Activated CD4-positive, alpha-beta T cell treated with anti-CD3 and anti-CD28 coated beads for 36 hours (primary cell): ENCODE measurements at regions of chr10 and their contacts with region 1.

Region 1: GRCh38 chr10:27223964-27224363 is 16.6 kb downstream of the ACBD5 start:
- DNase-seq: peak; percentile 65
- ATAC-seq: peak; percentile 73
- H3K4me3 Mint-ChIP-seq: no peak overlapping the region
- H3K27ac Mint-ChIP-seq: no peak overlapping the region
- H3K4me1 Mint-ChIP-seq: peaks cover 8% of the 10 kb centered on the region
- H3K27me3 Mint-ChIP-seq: no peaks in the 10 kb centered on the region

Region 2: GRCh38 chr10:27207350-27207749 is 16.6 kb before region 1 on chr10:
- CTCF ChIA-PET with region 1: interaction called, 10 read pairs
- POLR2A ChIA-PET with region 1: no interaction called
- intact Hi-C with region 1: no loop called
- DNase-seq: no peak
- ATAC-seq: no peak
- H3K4me3 Mint-ChIP-seq: no peak overlapping the region
- H3K27ac Mint-ChIP-seq: no peak overlapping the region
- H3K4me1 Mint-ChIP-seq: no peaks in the 10 kb centered on the region
- H3K27me3 Mint-ChIP-seq: no peaks in the 10 kb centered on the region

Region 3: GRCh38 chr10:27235706-27236105 is 11.7 kb after region 1 on chr10:
- CTCF ChIA-PET with region 1: interaction called, 22 read pairs
- POLR2A ChIA-PET with region 1: no interaction called
- intact Hi-C with region 1: no loop called
- DNase-seq: no peak
- ATAC-seq: no peak
- H3K4me3 Mint-ChIP-seq: no peak overlapping the region
- H3K27ac Mint-ChIP-seq: no peak overlapping the region
- H3K4me1 Mint-ChIP-seq: peaks cover 9% of the 10 kb centered on the region
- H3K27me3 Mint-ChIP-seq: no peaks in the 10 kb centered on the region

Region 4: GRCh38 chr10:27285108-27285507 is 61.1 kb after region 1 on chr10:
- CTCF ChIA-PET with region 1: interaction called, 10 read pairs
- POLR2A ChIA-PET with region 1: no interaction called
- intact Hi-C with region 1: loop called (anchors 1 to 2 kb)
- DNase-seq: peak; percentile 69
- ATAC-seq: peak; percentile 95
- H3K4me3 Mint-ChIP-seq: no peak overlapping the region
- H3K27ac Mint-ChIP-seq: peak overlapping the region; percentile 25
- H3K4me1 Mint-ChIP-seq: peaks cover 6% of the 10 kb centered on the region
- H3K27me3 Mint-ChIP-seq: no peaks in the 10 kb centered on the region

Region 5: GRCh38 chr10:27360581-27361172 is 136.7 kb after region 1 on chr10:
- CTCF ChIA-PET with region 1: interaction called, 25 read pairs
- POLR2A ChIA-PET with region 1: interaction called, 14 read pairs
- intact Hi-C with region 1: loop called (anchors 1 kb)
- DNase-seq: peak; percentile 91
- ATAC-seq: peak; percentile 96
- H3K4me3 Mint-ChIP-seq: no peak overlapping the region
- H3K27ac Mint-ChIP-seq: no peak overlapping the region
- H3K4me1 Mint-ChIP-seq: peaks cover 3% of the 10 kb centered on the region
- H3K27me3 Mint-ChIP-seq: no peaks in the 10 kb centered on the region

Region 6: DNA sequence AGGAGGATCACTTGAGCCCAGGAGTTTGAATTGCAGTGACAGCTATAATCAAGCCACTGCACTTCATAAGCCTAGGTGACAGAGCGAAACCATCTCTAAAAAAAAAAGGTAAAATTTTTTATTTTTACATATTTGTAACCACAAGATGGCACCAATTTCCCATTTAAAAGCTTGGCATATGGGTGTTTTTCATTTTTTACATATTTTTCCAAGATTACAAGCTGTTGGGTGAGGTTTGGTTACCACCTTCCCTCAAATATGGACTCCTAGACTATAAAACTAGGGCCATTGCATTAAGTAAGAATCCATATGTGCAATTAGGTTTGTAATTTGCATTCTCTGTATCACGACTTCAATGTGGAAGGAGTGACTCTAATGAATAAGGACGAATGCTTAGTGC is 145.9 kb after region 1 on chr10:
- CTCF ChIA-PET with region 1: interaction called, 11 read pairs
- POLR2A ChIA-PET with region 1: no interaction called
- intact Hi-C with region 1: no loop called
- DNase-seq: no peak
- ATAC-seq: no peak
- H3K4me3 Mint-ChIP-seq: no peak overlapping the region
- H3K27ac Mint-ChIP-seq: no peak overlapping the region
- H3K4me1 Mint-ChIP-seq: peaks cover 11% of the 10 kb centered on the region
- H3K27me3 Mint-ChIP-seq: peaks cover 2% of the 10 kb centered on the region